ENCODE measurements at regions of chr6 and their contacts with region 1.

Region 1: DNA sequence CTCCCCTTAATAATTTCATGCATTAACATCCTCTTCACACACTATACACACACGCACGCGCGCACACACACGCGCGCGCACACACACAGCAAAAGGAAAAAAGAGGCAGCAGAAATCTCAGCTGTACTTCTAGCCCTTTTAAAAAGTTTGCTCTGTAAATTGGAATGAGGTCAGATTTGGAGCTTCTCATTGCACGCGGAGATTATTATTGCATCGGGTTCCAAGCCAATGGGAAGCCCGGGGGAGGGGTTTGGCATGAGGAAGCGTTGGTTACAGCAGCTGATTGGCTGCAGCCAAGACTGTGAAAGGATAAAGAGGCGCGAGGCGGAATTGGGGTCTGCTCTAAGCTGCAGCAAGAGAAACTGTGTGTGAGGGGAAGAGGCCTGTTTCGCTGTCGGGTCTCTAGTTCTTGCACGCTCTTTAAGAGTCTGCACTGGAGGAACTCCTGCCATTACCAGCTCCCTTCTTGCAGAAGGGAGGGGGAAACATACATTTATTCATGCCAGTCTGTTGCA is at the start of gene SOX4:
- DNase-seq: peak; percentile 92
- ATAC-seq: peak; percentile 74
- H3K4me3 ChIP-seq: peak within 1 kb of the TSS; percentile 56 to 86 (median 71)
- H3K27ac ChIP-seq: no peak within 1 kb of the TSS
- H3K4me1 ChIP-seq: peaks cover 38% of the 10 kb centered on the region
- H3K27me3 ChIP-seq: peaks cover 0 to 37% of the 10 kb centered on the region in 2 experiments; a peak in 3 of 5 replicates
- CTCF ChIP-seq: no peak
- EP300 ChIP-seq: no peak
- POLR2A ChIP-seq: peak; percentile 75 to 76
- RAD21 ChIP-seq: no peak
- total RNA-seq, gene SOX4: 3.4 and 3.5 TPM in 2 replicates

Region 2: DNA sequence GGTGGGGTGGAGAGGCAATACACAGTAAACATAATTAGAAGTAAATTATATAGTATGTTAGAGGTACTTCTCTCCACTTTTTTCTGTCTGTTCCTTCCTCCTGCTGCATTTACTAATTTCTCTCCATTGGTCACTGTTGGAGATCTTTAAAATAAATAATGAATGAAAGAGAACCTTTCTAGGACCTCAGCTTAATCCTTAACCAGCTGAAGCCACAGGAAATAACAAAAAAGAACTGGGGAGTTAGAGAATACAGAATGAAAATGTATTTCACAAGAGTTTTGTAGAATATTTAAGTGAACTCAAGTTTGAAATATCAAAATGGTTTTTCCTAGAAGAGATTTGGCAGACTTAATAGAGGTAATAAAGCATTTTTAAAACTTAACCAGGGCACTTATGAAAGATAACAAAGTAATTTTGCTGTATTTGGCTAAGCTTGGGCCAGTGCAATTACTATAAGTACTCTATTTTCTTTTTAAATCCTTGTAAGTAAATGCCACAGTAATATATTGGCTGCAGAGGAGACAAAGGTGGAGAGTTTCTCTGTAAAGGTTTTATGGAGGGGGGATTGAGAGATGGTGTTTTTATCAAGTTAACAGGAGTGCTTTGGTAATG is 654.2 kb before region 1 on chr6:
- CTCF ChIA-PET with region 1: no interaction called
- POLR2A ChIA-PET with region 1: no interaction called
- in situ Hi-C with region 1: no loop called
- intact Hi-C with region 1: loop called (anchors 5 kb)
- DNase-seq: no peak
- ATAC-seq: no peak
- H3K4me3 ChIP-seq: no peak overlapping the region
- H3K27ac ChIP-seq: no peak overlapping the region
- H3K4me1 ChIP-seq: peaks cover 19% of the 10 kb centered on the region
- H3K27me3 ChIP-seq: no peaks in the 10 kb centered on the region
- CTCF ChIP-seq: no peak
- EP300 ChIP-seq: no peak; a peak in 1 of 4 replicates
- POLR2A ChIP-seq: no peak
- RAD21 ChIP-seq: no peak

Region 3: DNA sequence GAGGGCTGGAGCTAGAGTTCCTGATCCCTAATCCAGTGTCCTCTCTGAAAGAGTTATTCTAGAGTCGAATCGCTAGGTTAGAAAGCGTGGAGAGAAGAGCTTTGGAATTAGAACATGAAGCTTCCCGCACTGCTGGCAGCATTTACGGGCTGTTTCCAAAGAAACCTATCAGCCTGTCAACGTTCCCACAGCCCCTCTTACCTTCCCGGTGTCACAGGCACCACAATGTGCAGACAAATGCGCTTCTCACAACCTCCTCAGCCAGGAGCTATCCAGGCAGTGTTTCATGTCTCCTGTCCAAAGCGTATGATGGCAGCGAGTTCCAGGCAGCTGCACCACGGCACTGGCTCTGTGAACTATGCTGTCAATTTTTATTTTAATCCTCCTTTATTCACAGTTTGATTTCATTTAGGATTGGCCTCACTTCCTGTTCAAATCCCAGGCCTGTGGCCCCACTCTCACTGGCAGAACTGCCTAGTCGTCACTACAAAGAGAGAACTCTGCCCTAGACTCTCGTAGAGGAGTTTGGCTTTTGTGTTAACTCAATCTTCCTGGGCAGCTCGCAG is 322.8 kb before region 1 on chr6:
- CTCF ChIA-PET with region 1: interaction called, 3 read pairs
- POLR2A ChIA-PET with region 1: interaction called, 3 read pairs
- in situ Hi-C with region 1: no loop called
- intact Hi-C with region 1: loop called (anchors 2 kb)
- DNase-seq: no peak
- ATAC-seq: peak; percentile 89
- H3K4me3 ChIP-seq: peak overlapping the region; percentile 10 to 57 (median 43)
- H3K27ac ChIP-seq: no peak overlapping the region
- H3K4me1 ChIP-seq: peaks cover 18% of the 10 kb centered on the region
- H3K27me3 ChIP-seq: no peaks in the 10 kb centered on the region; a peak in 1 of 5 replicates
- CTCF ChIP-seq: no peak
- EP300 ChIP-seq: no peak
- POLR2A ChIP-seq: no peak
- RAD21 ChIP-seq: no peak

Region 4: DNA sequence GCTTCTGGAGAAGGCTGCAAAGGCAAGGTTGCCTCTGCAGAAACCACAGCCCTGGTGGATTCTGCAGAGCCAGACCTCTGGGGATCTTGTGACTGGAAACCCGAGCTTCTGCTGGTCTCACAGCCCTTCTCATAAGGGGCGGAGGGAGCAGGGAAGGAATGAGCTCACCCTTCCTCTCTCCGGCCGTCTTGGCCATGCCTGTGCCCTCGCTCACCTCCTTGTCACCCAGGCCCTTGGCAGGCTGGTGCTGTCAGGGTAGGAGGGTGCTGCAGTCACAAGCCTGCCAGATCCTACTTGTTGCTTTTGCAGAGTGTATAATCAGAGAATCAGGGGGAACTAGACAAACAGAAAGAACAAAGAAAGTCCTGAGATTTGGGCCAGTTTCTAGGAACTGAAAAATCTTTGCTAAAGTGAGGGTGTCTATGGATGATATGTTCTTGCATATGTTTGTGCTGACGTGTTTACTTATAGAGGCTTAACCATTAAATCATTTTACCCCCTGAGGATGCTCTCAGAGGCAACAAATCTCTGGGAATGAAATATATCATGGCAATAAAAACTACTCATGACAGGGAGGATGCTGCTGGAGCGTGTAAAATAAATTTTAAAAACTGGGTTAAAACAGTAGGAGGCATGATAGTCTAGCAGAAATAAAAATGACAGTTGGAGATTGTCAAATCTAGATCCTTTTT is 244.8 kb before region 1 on chr6:
- CTCF ChIA-PET with region 1: no interaction called
- POLR2A ChIA-PET with region 1: no interaction called
- in situ Hi-C with region 1: loop called (anchors 10 kb)
- intact Hi-C with region 1: no loop called
- DNase-seq: no peak
- ATAC-seq: no peak
- H3K4me3 ChIP-seq: no peak overlapping the region
- H3K27ac ChIP-seq: no peak overlapping the region
- H3K4me1 ChIP-seq: no peaks in the 10 kb centered on the region
- H3K27me3 ChIP-seq: peaks cover 0 to 4% of the 10 kb centered on the region in 2 experiments; a peak in 1 of 5 replicates
- CTCF ChIP-seq: no peak
- EP300 ChIP-seq: no peak
- POLR2A ChIP-seq: no peak
- RAD21 ChIP-seq: no peak

Region 5: DNA sequence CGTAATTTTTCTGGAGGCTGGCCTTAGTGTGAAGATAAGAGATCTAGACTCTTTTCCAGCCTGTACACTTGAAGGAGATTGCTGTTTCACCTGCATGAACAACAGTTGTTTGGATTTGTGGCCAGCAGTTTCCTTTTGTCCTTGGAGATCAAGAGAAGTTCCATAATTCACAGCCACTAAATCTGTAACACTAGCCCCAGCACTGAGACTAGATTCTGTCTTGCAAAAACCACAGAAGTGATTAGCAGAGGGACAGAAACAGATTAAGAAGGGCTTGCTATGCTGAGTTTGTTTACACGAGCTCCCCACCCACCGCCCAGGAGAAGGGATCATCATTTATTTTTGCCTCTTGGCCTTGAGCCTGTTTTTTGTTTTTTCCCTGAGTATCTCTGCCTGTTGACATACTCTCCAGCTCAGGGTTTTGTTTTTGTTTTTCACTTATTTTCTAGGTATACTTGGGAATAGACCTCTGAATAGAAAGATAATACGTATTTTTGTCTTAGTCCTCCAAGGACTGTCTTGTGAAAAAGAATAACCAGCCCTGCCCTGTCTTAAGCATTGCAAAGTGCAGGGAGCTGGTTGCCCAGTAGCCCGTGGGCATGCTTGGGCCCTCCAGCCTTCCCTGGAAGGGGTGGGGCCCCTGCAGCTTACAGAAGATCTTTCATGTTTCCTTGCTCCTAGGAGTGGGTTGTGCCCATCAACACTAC is 93.0 kb before region 1 on chr6:
- CTCF ChIA-PET with region 1: no interaction called
- POLR2A ChIA-PET with region 1: no interaction called
- in situ Hi-C with region 1: no loop called
- intact Hi-C with region 1: loop called (anchors 1 kb)
- DNase-seq: no peak
- ATAC-seq: 0 out of 3 replicates have a peak, but pooled peaks have one; percentile 19
- H3K4me3 ChIP-seq: no peak overlapping the region
- H3K27ac ChIP-seq: no peak overlapping the region
- H3K4me1 ChIP-seq: peaks cover 33% of the 10 kb centered on the region
- H3K27me3 ChIP-seq: no peaks in the 10 kb centered on the region
- CTCF ChIP-seq: no peak
- EP300 ChIP-seq: no peak
- POLR2A ChIP-seq: no peak
- RAD21 ChIP-seq: no peak

Region 6: DNA sequence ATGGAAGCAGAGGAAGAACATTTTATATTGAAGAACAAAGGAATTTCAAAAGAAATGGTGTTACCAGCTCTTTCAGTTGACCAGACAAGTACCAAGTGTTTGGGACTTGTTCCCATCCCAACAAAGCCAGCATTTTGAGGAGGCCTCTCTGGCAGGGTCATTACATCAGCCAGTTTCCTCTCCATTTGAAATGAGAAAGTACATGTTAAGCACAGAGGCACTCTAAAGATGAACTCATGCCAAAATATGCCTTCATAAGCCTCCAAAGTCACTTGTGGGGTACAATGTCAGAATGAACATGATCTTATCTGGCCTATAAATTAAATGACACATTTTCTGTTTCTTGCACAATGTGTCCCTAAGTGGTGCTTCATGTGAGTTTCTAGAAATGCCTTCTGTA is 479.5 kb after region 1 on chr6:
- CTCF ChIA-PET with region 1: no interaction called
- POLR2A ChIA-PET with region 1: no interaction called
- in situ Hi-C with region 1: no loop called
- intact Hi-C with region 1: no loop called
- DNase-seq: no peak
- ATAC-seq: no peak
- H3K4me3 ChIP-seq: no peak overlapping the region
- H3K27ac ChIP-seq: no peak overlapping the region
- H3K4me1 ChIP-seq: no peaks in the 10 kb centered on the region
- H3K27me3 ChIP-seq: no peaks in the 10 kb centered on the region
- CTCF ChIP-seq: no peak
- EP300 ChIP-seq: no peak
- POLR2A ChIP-seq: no peak
- RAD21 ChIP-seq: no peak

Measured in HepG2 (cell line).